Heart left ventricle (tissue), 16 donors: ENCODE measurements at regions of chr2 and their contacts with region 1.

Region 1: DNA sequence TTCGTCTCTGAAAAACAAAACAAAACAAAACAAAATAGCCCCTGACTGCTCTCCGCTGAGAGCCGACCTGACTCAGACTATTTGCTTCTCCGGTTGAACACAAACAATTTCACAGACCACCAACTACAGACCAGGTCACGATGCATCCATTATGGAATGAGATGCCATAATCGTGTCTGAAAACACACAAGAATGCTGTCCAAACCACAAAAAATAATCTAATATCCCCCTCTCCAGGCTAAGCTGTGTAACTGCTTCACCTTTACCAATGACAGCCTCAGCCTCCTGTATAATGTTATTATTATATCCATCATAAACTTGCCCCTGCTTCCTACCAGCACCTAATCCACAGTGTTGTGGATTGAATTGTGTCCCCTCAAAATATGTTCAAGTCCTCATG is 114.7 kb downstream of the DNAH6 start:
- DNase-seq: no peak
- ATAC-seq: peak in 1 of 4 donors; percentile 64
- H3K4me3 ChIP-seq: no peak overlapping the region
- H3K27ac ChIP-seq: no peak overlapping the region
- H3K4me1 ChIP-seq: no peaks in the 10 kb centered on the region
- H3K27me3 ChIP-seq: no peaks in the 10 kb centered on the region
- CTCF ChIP-seq: peak; percentile 17 to 65 (median 42)
- POLR2A ChIP-seq: no peak

Region 2: DNA sequence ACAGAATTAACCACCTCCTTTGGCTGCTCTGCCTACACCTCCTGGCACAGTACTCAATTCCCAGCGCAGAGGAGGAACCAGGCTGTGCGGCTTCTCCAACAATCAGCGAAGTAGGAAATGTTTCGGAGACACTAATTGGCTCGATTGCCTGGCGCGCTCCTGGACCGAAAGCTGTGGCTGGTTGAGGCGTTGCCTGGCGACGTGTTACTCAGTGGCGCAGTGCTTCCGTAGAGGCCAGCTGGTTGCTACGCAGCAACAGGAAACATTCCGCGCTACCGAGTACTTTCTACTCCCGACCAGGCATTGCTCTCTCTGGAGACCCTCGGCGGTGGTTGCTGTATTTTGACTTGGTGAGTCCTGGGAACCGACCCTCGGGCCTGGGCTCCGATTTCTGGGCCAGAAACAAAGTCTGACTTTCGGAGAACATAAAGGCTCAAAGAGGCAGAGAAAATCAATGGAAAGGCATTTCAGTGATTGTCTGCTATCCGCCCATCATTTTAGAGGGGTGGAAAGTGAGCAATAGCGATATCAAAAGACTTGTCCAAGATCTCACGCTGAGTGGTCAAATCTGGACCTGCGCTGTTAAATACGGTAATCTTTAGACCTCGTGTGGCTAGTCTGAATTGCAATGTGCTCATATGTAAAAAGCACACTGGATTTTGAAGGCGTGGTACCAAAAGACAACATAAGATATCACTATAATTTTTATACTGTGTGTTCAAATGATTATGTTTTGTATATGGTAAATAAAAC is 114.6 kb before region 1 on chr2 and contains the start of gene DNAH6:
- intact Hi-C with region 1: no loop called
- DNase-seq: peak; percentile 92 to 95 (median 93)
- ATAC-seq: peak; percentile 99 to 100 (median 100)
- H3K4me3 ChIP-seq: peak within 1 kb of the TSS; percentile 12 to 66 (median 52)
- H3K27ac ChIP-seq: peak within 1 kb of the TSS in 2 of 12 donors; percentile 11 to 15
- H3K4me1 ChIP-seq: peaks cover 0 to 10% (median 4%) of the 10 kb centered on the region in 12 donors
- H3K27me3 ChIP-seq: no peaks in the 10 kb centered on the region
- CTCF ChIP-seq: no peak
- POLR2A ChIP-seq: no peak
- total RNA-seq, gene DNAH6: 0.05 to 0.75 (median 0.13) TPM in 7 of 9 donors, not detected in the others

Region 3: GRCh38 chr2:84850471-84850870 is 219.4 kb after region 1 on chr2:
- intact Hi-C with region 1: loop called in 1 of 10 experiments (anchors 5 kb)
- DNase-seq: no peak
- ATAC-seq: no peak
- H3K4me3 ChIP-seq: no peak overlapping the region
- H3K27ac ChIP-seq: no peak overlapping the region
- H3K4me1 ChIP-seq: peaks cover 0 to 24% (median 0%) of the 10 kb centered on the region in 12 donors
- H3K27me3 ChIP-seq: no peaks in the 10 kb centered on the region
- CTCF ChIP-seq: no peak
- POLR2A ChIP-seq: no peak

Region 4: GRCh38 chr2:84865181-84865783 is 234.2 kb after region 1 on chr2:
- intact Hi-C with region 1: loop called in 2 of 10 experiments (anchors 10 kb)
- DNase-seq: no peak
- ATAC-seq: no peak
- H3K4me3 ChIP-seq: no peak overlapping the region
- H3K27ac ChIP-seq: no peak overlapping the region
- H3K4me1 ChIP-seq: no peaks in the 10 kb centered on the region
- H3K27me3 ChIP-seq: no peaks in the 10 kb centered on the region
- CTCF ChIP-seq: peak in 10 of 12 donors; percentile 4 to 47 (median 36)
- POLR2A ChIP-seq: no peak